IMR-90 (cell line): ENCODE measurements at regions of chr16 and their contacts with region 1.

Region 1: GRCh38 chr16:17467923-17468540 is 2.7 kb downstream of the XYLT1 start:
- DNase-seq: peak; percentile 69
- ATAC-seq: peak; percentile 27; the same call in 1 of the 2 replicates
- H3K4me3 ChIP-seq: no peak overlapping the region
- H3K27ac ChIP-seq: no peak overlapping the region
- H3K4me1 ChIP-seq: peaks cover 13% of the 10 kb centered on the region
- H3K27me3 ChIP-seq: no peaks in the 10 kb centered on the region
- CTCF ChIP-seq: peak; percentile 69
- POLR2A ChIP-seq: no peak
- RAD21 ChIP-seq: peak; percentile 74

Region 2: DNA sequence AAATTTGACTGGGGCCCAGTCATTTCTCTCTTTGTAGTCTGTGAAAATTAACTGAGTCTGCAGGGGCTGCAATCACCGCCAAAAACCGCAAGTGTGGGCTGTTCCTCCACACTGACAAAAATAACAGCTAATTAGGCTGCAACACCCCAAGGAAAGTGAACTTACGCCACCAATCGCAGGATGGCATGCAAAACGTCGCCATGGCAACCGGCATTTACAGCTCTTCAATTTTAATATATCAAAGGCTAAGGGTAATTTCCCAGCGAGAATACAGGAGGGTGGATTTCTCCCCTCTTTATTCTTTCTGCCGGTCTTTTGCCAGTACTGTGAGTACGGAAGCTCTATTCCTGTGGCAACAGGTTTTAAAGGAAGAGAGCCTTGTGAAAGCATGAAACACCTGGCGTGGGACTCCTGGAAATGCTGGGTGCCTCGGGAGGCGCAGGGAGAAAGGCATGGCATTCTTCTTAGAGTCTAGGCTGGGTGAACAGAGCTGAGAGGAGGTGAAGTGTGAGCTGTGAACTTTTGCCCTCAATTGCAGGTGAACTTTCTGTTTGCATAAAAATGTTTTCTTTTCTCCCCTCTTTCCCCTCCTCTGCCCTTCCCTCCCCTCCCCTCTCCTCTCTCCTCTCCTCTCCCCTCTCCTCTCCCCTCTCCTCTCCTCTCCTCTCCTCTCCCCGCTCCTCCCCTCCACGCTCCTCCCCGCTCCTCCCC is 397.0 kb before region 1 on chr16:
- CTCF ChIA-PET with region 1: no interaction called
- POLR2A ChIA-PET with region 1: no interaction called
- dilution Hi-C with region 1: no loop called
- in situ Hi-C with region 1: no loop called
- intact Hi-C with region 1: loop called (anchors 10 kb)
- DNase-seq: no peak
- ATAC-seq: no peak
- H3K4me3 ChIP-seq: no peak overlapping the region
- H3K27ac ChIP-seq: no peak overlapping the region
- H3K4me1 ChIP-seq: no peaks in the 10 kb centered on the region
- H3K27me3 ChIP-seq: no peaks in the 10 kb centered on the region
- CTCF ChIP-seq: no peak
- POLR2A ChIP-seq: no peak
- RAD21 ChIP-seq: no peak

Region 3: DNA sequence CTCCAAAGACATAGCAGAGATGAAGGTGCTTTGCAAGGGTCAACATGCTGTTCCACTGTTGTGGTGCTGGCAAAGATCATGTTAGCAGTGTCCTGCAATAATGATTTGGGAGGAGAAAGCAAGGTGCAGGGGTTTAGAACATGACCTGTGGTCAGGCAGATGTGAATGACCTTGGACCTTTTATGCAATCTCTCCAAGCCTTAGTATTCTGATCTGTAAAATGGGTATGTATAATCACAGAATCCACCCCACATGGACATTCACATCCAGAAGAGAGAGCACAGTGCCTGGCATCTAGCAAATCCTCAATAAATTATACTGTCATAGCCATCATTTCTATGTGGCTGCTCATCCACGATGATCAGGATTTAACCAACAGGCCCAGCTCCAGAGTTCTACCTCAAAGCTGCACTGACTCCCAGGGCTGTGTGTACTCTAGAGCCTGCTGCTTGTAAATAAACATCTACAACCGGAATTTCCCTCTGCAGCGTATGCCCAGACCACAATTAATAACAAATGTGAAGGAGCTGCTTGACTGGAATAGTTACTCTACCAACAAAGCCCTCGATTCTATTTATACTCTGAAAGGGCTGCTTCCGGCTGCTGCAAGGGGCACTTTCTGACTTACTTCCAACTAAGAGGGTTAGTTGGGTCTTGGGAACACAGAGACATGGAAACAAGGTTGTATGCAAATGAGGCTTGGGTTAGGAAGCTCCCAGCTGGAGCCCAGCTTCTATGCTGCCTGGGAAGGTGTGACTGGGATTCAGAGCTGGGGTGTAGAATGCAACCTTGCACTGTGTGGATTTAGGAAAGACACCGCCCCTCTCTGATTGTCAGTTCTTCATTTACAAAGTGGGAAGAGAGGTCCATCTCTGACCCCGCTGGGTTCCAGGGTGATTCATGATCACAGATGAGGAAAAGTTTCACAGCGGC is 262.5 kb before region 1 on chr16:
- CTCF ChIA-PET with region 1: interaction called, 3 read pairs
- POLR2A ChIA-PET with region 1: no interaction called
- dilution Hi-C with region 1: no loop called
- in situ Hi-C with region 1: loop called (anchors 25 kb)
- intact Hi-C with region 1: loop called (anchors 5 kb)
- DNase-seq: peak; percentile 87
- ATAC-seq: peak; percentile 95
- H3K4me3 ChIP-seq: no peak overlapping the region
- H3K27ac ChIP-seq: no peak overlapping the region
- H3K4me1 ChIP-seq: peaks cover 4% of the 10 kb centered on the region
- H3K27me3 ChIP-seq: no peaks in the 10 kb centered on the region
- CTCF ChIP-seq: no peak
- POLR2A ChIP-seq: no peak
- RAD21 ChIP-seq: no peak

Region 4: DNA sequence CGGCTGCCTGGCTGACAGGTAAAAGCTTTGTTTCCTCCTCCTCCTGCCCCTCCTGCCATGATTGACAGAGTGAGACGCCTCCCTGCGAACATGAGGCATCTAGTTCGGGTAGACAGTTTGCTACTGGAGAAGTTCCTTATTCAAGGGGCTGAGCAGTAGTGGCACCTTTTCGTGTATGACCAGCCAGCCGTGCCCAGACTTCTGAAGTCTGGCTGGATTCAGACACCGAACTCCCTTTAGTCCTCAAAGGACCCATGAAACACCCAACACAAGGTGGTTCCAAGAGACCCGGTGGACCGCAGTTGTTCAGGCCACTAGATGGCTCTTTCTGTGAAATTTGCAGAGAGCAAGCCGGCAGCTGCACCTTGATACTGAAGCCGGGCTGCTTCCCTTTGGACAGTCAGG is 190.1 kb before region 1 on chr16:
- CTCF ChIA-PET with region 1: interaction called, 11 read pairs
- POLR2A ChIA-PET with region 1: no interaction called
- dilution Hi-C with region 1: no loop called
- in situ Hi-C with region 1: no loop called
- intact Hi-C with region 1: loop called (anchors 2 kb)
- DNase-seq: peak; percentile 7
- ATAC-seq: peak; percentile 17; the same call in 1 of the 2 replicates
- H3K4me3 ChIP-seq: no peak overlapping the region
- H3K27ac ChIP-seq: no peak overlapping the region
- H3K4me1 ChIP-seq: peaks cover 2% of the 10 kb centered on the region
- H3K27me3 ChIP-seq: no peaks in the 10 kb centered on the region
- CTCF ChIP-seq: peak; percentile 20; the same call in 1 of the 2 replicates
- POLR2A ChIP-seq: no peak
- RAD21 ChIP-seq: 0 out of 2 replicates have a peak, but pooled peaks have one; percentile 13

Region 5: DNA sequence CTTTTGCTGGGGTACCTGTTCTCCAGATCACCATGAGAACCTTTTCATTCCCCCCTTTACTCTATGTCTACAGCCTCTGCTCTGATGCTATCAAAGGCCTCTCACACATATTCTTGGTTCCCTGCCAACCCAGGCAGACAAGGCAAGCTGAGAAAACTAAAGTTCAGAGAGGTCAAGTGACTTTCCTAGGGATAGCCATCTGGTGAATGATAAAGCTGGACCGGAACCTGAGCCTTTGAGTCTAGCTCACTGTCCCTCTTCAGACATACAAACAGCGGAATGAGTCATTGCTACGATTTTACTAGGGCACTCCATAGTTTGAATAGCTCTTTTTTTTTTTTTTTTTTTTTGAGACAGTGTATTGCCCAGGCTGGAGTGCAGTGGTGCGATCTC is 70.5 kb before region 1 on chr16:
- CTCF ChIA-PET with region 1: no interaction called
- POLR2A ChIA-PET with region 1: no interaction called
- dilution Hi-C with region 1: no loop called
- in situ Hi-C with region 1: no loop called
- intact Hi-C with region 1: loop called (anchors 5 kb)
- DNase-seq: peak; percentile 83
- ATAC-seq: peak; percentile 86
- H3K4me3 ChIP-seq: no peak overlapping the region
- H3K27ac ChIP-seq: no peak overlapping the region
- H3K4me1 ChIP-seq: peaks cover 8% of the 10 kb centered on the region
- H3K27me3 ChIP-seq: no peaks in the 10 kb centered on the region
- CTCF ChIP-seq: no peak
- POLR2A ChIP-seq: no peak
- RAD21 ChIP-seq: no peak

Region 6: GRCh38 chr16:17529982-17530765 is 62.1 kb after region 1 on chr16:
- CTCF ChIA-PET with region 1: no interaction called
- POLR2A ChIA-PET with region 1: no interaction called
- dilution Hi-C with region 1: no loop called
- in situ Hi-C with region 1: no loop called
- intact Hi-C with region 1: no loop called
- DNase-seq: no peak
- ATAC-seq: no peak
- H3K4me3 ChIP-seq: no peak overlapping the region
- H3K27ac ChIP-seq: no peak overlapping the region
- H3K4me1 ChIP-seq: no peaks in the 10 kb centered on the region
- H3K27me3 ChIP-seq: peaks cover 2% of the 10 kb centered on the region; the same call in 1 of the 2 replicates
- CTCF ChIP-seq: no peak
- POLR2A ChIP-seq: no peak
- RAD21 ChIP-seq: no peak